Heart left ventricle (tissue), 16 donors: ENCODE measurements at regions of chr5 and their contacts with region 1.

Region 1: DNA sequence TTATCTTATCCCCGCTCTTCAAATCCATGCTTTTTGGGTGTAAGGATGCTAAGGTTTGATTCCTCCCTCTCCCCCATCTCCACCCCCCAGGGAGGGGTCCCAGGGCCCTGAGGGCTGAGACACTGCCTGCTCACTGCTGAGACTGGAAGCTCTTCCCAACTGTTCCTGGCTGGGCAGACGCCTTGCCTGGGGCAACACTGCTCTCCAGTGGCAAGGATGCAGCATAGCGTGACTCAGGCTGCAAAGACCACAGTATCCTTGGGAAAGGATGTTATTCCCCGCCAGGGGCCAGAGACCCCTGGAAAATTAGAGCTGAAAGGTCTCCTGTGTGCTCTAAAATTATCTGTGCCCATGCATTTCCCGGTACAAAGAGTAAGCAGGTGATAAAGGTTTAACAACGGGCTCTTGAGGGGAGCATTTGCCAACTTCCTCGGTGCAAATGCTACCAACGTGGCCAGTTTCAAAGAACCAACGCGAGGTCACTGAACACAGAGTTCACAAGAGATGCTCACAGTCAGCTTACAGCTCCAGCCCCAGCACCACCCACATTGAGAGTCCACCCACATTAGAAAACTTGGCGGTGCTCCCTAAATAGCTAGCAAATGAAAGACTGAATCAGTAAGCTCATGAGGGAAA is 271.9 kb downstream of the NSG2 start:
- DNase-seq: peak in 2 of 5 donors; percentile 18 to 46
- ATAC-seq: peak; percentile 57 to 94 (median 90)
- H3K4me3 ChIP-seq: no peak overlapping the region
- H3K27ac ChIP-seq: no peak overlapping the region
- H3K4me1 ChIP-seq: peaks cover 0 to 5% (median 0%) of the 10 kb centered on the region in 12 donors
- H3K27me3 ChIP-seq: peaks cover 0 to 36% (median 8%) of the 10 kb centered on the region in 9 donors
- CTCF ChIP-seq: peak; percentile 41 to 80 (median 70)
- POLR2A ChIP-seq: no peak

Region 2: GRCh38 chr5:174045470-174046025 is 271.8 kb before region 1 on chr5 and contains the start of gene NSG2:
- intact Hi-C with region 1: loop called (anchors 1 to 5 kb)
- DNase-seq: peak; percentile 78 to 89 (median 87)
- ATAC-seq: peak; percentile 98 to 100 (median 99)
- H3K4me3 ChIP-seq: no peak within 1 kb of the TSS
- H3K27ac ChIP-seq: no peak within 1 kb of the TSS
- H3K4me1 ChIP-seq: no peaks in the 10 kb centered on the region
- H3K27me3 ChIP-seq: peaks cover 0 to 10% (median 0%) of the 10 kb centered on the region in 9 donors
- CTCF ChIP-seq: peak; percentile 43 to 81 (median 66)
- POLR2A ChIP-seq: no peak
- total RNA-seq, gene NSG2: 0.36 to 1.7 (median 0.50) TPM in 5 of 9 donors, not detected in the others

Region 3: GRCh38 chr5:174402221-174402815 is 84.9 kb after region 1 on chr5:
- intact Hi-C with region 1: no loop called
- DNase-seq: no peak
- ATAC-seq: no peak
- H3K4me3 ChIP-seq: no peak overlapping the region
- H3K27ac ChIP-seq: no peak overlapping the region
- H3K4me1 ChIP-seq: no peaks in the 10 kb centered on the region
- H3K27me3 ChIP-seq: peaks cover 0 to 8% (median 0%) of the 10 kb centered on the region in 9 donors
- CTCF ChIP-seq: no peak
- POLR2A ChIP-seq: no peak